ENCODE measurements at regions of chr9 and their contacts with region 1.

Region 1: DNA sequence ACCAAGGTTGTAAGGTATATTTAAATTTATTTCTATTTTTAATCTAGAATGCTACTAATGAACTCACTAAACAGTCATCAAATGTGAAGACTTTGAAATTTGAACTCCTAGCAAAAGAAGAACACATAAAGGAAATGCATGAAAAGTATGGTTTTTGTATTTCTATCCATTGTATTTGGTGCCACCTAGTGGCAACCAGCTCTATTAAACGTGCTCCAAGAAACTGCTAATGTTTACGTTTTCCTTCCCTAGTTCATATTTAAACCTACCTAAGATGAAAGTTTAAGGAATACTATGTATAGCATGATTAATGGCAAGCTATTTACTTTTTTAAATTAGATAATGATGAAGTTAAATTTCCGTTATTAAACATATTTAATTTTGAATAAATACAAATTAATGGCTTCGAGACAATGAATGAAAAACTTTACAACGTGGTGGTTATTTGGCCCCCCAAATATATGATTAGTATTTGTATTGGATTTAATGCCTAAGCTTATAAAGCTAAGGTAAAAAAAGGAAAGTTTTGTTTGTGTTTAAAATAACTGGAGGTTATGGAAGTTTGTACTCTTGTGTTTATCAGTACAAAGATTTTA is 115.9 kb upstream of the SH3GL2 start:
- DNase-seq: no peak
- ATAC-seq: peak; percentile 40; the same call in 1 of the 2 replicates
- H3K4me3 ChIP-seq: no peak overlapping the region
- H3K27ac ChIP-seq: no peak overlapping the region
- H3K4me1 ChIP-seq: no peaks in the 10 kb centered on the region
- H3K27me3 ChIP-seq: no peaks in the 10 kb centered on the region
- CTCF ChIP-seq: peak; percentile 43 to 74 (median 50); a peak in 5 of 6 replicates
- POLR2A ChIP-seq: no peak
- RAD21 ChIP-seq: peak; percentile 68

Region 2: GRCh38 chr9:15873569-15874177 is 1589.3 kb before region 1 on chr9:
- CTCF ChIA-PET with region 1: no interaction called
- POLR2A ChIA-PET with region 1: no interaction called
- RAD21 ChIA-PET with region 1: no interaction called
- intact Hi-C with region 1: loop called (anchors 2 kb)
- DNase-seq: peak; percentile 24
- ATAC-seq: peak; percentile 58; the same call in 1 of the 2 replicates
- H3K4me3 ChIP-seq: no peak overlapping the region
- H3K27ac ChIP-seq: no peak overlapping the region
- H3K4me1 ChIP-seq: no peaks in the 10 kb centered on the region
- H3K27me3 ChIP-seq: no peaks in the 10 kb centered on the region
- CTCF ChIP-seq: peak; percentile 51 to 72 (median 52); a peak in 5 of 6 replicates
- POLR2A ChIP-seq: no peak
- RAD21 ChIP-seq: peak; percentile 71

Region 3: DNA sequence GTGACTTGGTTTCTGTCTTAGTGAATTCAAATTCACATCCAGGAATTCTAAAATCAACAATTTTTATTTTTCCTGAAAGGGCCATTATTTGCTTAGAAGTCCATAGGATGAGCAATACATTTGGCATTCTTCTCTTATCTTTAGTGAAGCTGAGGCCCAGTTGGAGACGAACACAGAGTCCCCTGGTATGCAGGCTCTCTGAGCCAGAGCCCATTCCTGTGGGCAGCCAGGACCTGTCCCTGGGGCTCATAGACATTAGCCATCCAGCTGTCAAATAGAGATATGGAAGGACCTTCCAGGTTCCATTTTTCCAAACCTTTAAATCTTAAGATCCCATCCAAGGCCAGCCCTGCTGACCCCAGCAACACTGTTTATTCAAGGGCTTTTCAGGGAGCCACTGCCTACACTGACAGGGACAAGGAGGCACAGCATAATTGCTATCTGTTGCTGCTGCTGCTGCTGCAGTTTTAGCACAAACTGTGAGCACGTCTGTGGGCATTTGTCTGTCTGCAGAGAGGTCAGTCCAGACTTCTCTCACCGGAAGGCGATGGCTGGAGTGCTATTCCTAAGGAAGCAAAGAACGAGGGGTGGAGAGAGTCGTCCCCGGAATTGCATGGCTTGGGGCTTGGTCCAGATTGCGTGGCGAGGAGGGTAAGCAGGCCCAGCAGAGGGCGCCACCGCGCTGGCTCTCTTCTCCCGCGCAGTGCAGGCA is 1271.1 kb before region 1 on chr9:
- CTCF ChIA-PET with region 1: no interaction called
- POLR2A ChIA-PET with region 1: no interaction called
- RAD21 ChIA-PET with region 1: no interaction called
- intact Hi-C with region 1: loop called (anchors 5 kb)
- DNase-seq: peak; percentile 16
- ATAC-seq: peak; percentile 100
- H3K4me3 ChIP-seq: no peak overlapping the region
- H3K27ac ChIP-seq: no peak overlapping the region
- H3K4me1 ChIP-seq: peaks cover 0 to 5% of the 10 kb centered on the region in 2 experiments; a peak in 1 of 4 replicates
- H3K27me3 ChIP-seq: no peaks in the 10 kb centered on the region
- CTCF ChIP-seq: peak; percentile 20 to 80 (median 71); a peak in 5 of 6 replicates
- POLR2A ChIP-seq: no peak
- RAD21 ChIP-seq: peak; percentile 71

Region 4: DNA sequence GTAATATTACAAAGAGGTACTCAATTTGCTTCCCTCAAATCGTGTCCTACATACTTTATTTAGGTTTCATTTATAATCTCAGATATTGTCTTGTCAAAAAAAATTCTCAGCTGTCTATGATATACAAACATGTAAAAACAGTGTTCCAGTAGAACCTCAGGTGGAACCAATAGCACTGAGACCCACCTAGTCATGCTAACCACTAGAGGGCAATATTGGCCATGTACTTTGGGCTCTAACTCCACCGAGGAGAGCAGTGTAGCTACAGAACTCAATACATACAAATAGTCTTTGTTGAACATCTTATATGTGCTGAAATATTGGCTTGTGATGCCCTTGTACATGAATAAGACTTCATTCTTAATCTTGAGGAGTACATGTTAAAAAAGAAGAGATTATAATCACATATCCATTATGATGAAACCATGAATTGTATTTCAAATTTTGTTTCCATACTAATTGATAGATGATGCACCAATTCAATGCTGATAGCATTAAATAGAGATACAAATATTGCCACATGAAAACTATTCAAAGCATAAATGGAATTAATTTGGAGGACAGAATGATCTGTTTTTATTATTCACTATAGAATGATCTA is 399.3 kb before region 1 on chr9:
- CTCF ChIA-PET with region 1: interaction called, 11 read pairs
- POLR2A ChIA-PET with region 1: no interaction called
- RAD21 ChIA-PET with region 1: no interaction called
- intact Hi-C with region 1: loop called (anchors 2 kb)
- DNase-seq: peak; percentile 32
- ATAC-seq: peak; percentile 87
- H3K4me3 ChIP-seq: no peak overlapping the region
- H3K27ac ChIP-seq: no peak overlapping the region
- H3K4me1 ChIP-seq: no peaks in the 10 kb centered on the region
- H3K27me3 ChIP-seq: no peaks in the 10 kb centered on the region
- CTCF ChIP-seq: peak in 2 of 3 experiments; percentile 69 to 84; a peak in 4 of 6 replicates
- POLR2A ChIP-seq: no peak
- RAD21 ChIP-seq: peak; percentile 54

Region 5: GRCh38 chr9:17116400-17116837 is 346.5 kb before region 1 on chr9:
- CTCF ChIA-PET with region 1: interaction called, 3 read pairs
- POLR2A ChIA-PET with region 1: no interaction called
- RAD21 ChIA-PET with region 1: interaction called in 1 of 2 experiments, 6 read pairs
- intact Hi-C with region 1: loop called (anchors 1 kb)
- DNase-seq: peak; percentile 19
- ATAC-seq: peak; percentile 63
- H3K4me3 ChIP-seq: no peak overlapping the region
- H3K27ac ChIP-seq: no peak overlapping the region
- H3K4me1 ChIP-seq: no peaks in the 10 kb centered on the region
- H3K27me3 ChIP-seq: no peaks in the 10 kb centered on the region
- CTCF ChIP-seq: peak; percentile 15 to 56 (median 21); a peak in 3 of 6 replicates
- POLR2A ChIP-seq: no peak
- RAD21 ChIP-seq: peak; percentile 44; the same call in 1 of the 2 replicates

Region 6: GRCh38 chr9:17219261-17219660 is 243.7 kb before region 1 on chr9:
- CTCF ChIA-PET with region 1: no interaction called
- POLR2A ChIA-PET with region 1: no interaction called
- RAD21 ChIA-PET with region 1: no interaction called
- intact Hi-C with region 1: loop called (anchors 5 kb)
- DNase-seq: no peak
- ATAC-seq: no peak
- H3K4me3 ChIP-seq: no peak overlapping the region
- H3K27ac ChIP-seq: no peak overlapping the region
- H3K4me1 ChIP-seq: no peaks in the 10 kb centered on the region
- H3K27me3 ChIP-seq: no peaks in the 10 kb centered on the region
- CTCF ChIP-seq: peak in 2 of 3 experiments; percentile 22 to 26; a peak in 2 of 6 replicates
- POLR2A ChIP-seq: no peak
- RAD21 ChIP-seq: peak; percentile 26; the same call in 1 of the 2 replicates

Measured in HCT116 (cell line).